Body of pancreas (tissue), 4 donors: ENCODE measurements at regions of chr3 and their contacts with region 1.

Region 1: GRCh38 chr3:132730891-132731580 is 8.8 kb upstream of the NPHP3 start:
- DNase-seq: no peak
- ATAC-seq: no peak
- H3K4me3 ChIP-seq: no peak overlapping the region
- H3K27ac ChIP-seq: no peak overlapping the region
- H3K4me1 ChIP-seq: no peaks in the 10 kb centered on the region
- H3K27me3 ChIP-seq: no peaks in the 10 kb centered on the region
- CTCF ChIP-seq: peak in 5 of 7 experiments; percentile 8 to 53 (median 39)
- POLR2A ChIP-seq: no peak

Region 2: DNA sequence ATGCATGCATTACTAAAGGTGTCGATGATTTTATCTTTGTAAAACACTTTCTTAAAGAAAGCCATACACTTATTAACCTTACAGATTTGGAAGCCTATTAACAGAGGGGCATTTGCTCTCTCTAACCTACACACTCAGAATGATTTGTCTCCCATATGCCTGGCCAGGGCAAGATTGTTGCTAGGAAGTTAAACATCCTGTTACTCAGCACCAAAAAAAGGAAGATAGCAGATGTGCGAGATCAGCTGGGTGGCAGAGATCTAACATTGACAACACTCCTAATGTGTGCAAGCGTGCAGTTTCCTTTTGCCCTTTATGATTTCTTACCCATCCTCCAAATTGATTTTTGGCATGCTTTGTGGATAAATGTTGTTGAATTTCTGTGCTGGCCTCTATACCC is 233.2 kb after region 1 on chr3:
- intact Hi-C with region 1: no loop called
- DNase-seq: no peak
- ATAC-seq: no peak
- H3K4me3 ChIP-seq: no peak overlapping the region
- H3K27ac ChIP-seq: no peak overlapping the region
- H3K4me1 ChIP-seq: no peaks in the 10 kb centered on the region
- H3K27me3 ChIP-seq: no peaks in the 10 kb centered on the region
- CTCF ChIP-seq: no peak
- POLR2A ChIP-seq: no peak

Region 3: GRCh38 chr3:133384331-133385027 is 653.4 kb after region 1 on chr3:
- intact Hi-C with region 1: loop called (anchors 10 kb)
- DNase-seq: peak; percentile 68 to 80 (median 70)
- ATAC-seq: peak; percentile 77
- H3K4me3 ChIP-seq: no peak overlapping the region
- H3K27ac ChIP-seq: no peak overlapping the region
- H3K4me1 ChIP-seq: peaks cover 34% of the 10 kb centered on the region
- H3K27me3 ChIP-seq: no peaks in the 10 kb centered on the region
- CTCF ChIP-seq: peak; percentile 65 to 90 (median 83)
- POLR2A ChIP-seq: no peak

Region 4: DNA sequence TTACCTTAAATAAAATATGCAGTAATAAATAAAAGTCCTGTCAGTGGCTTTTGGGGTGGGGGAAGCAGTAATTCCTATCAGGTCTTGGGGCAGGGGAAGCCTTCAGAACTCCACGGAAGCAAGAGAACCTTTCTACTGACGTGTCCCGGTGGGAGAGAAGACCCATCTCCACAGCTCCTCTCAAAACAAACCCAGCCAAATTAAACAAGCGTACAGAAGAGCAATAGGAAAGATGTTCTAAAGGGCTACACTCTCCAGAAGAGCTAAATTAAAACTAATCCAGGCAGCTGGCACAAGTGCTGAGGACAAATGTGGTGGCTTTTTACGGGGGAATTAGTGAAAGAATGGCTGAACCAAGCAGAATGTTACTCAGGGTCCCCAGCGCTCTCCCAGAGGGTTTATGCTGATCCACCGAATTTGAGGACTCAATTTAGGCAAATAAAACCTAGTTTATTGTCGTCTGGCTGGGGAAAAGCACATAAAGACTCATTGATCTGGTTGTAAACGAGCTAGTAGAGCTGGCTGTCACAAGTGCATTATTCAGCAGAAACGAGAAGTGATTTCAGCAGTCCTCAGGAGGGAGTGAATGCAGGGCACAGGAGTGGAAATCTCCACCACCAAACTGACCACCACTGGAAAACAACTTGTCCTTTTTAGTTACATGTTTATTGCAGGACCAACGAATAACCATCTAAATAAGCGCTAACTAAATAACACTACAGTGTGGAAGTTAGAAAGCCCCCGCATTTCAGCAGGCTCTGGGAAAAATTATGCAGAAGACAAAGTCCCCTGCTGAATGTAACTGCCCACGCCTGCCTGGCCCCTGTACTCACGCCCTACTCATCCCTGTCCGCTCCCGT is 682.4 kb after region 1 on chr3:
- intact Hi-C with region 1: loop called (anchors 10 kb)
- DNase-seq: peak in 2 of 4 donors; percentile 22
- ATAC-seq: peak; percentile 65
- H3K4me3 ChIP-seq: no peak overlapping the region
- H3K27ac ChIP-seq: peak overlapping the region in 1 of 4 donors; percentile 36
- H3K4me1 ChIP-seq: peaks cover 7% of the 10 kb centered on the region
- H3K27me3 ChIP-seq: no peaks in the 10 kb centered on the region
- CTCF ChIP-seq: no peak
- POLR2A ChIP-seq: no peak